Right lobe of liver (tissue), 6 donors: ENCODE measurements at regions of chr1 and their contacts with region 1.

Region 1: GRCh38 chr1:1441002-1441888 is 5.8 kb downstream of the VWA1 start:
- DNase-seq: peak in 1 of 3 donors; percentile 68
- ATAC-seq: peak; percentile 55 to 61 (median 58)
- H3K4me3 ChIP-seq: no peak overlapping the region
- H3K27ac ChIP-seq: no peak overlapping the region
- H3K4me1 ChIP-seq: peaks cover 0 to 34% (median 13%) of the 10 kb centered on the region in 4 donors
- H3K27me3 ChIP-seq: no peaks in the 10 kb centered on the region
- CTCF ChIP-seq: peak; percentile 80 to 89 (median 86)
- POLR2A ChIP-seq: no peak

Region 2: GRCh38 chr1:1387098-1388077 is 53.9 kb before region 1 on chr1:
- intact Hi-C with region 1: no loop called
- DNase-seq: no peak
- ATAC-seq: peak in 1 of 4 donors; percentile 36
- H3K4me3 ChIP-seq: no peak overlapping the region
- H3K27ac ChIP-seq: no peak overlapping the region
- H3K4me1 ChIP-seq: peaks cover 0 to 16% (median 0%) of the 10 kb centered on the region in 4 donors
- H3K27me3 ChIP-seq: no peaks in the 10 kb centered on the region
- CTCF ChIP-seq: no peak
- POLR2A ChIP-seq: no peak

Region 3: GRCh38 chr1:1406817-1407635 is 34.2 kb before region 1 on chr1 and contains the start of gene MRPL20:
- intact Hi-C with region 1: loop called in 1 of 2 experiments (anchors 5 kb)
- DNase-seq: peak; percentile 95 to 96 (median 96)
- ATAC-seq: peak; percentile 95 to 98 (median 98)
- H3K4me3 ChIP-seq: peak within 1 kb of the TSS; percentile 92 to 100 (median 100)
- H3K27ac ChIP-seq: peak within 1 kb of the TSS; percentile 65 to 82 (median 68)
- H3K4me1 ChIP-seq: peaks cover 0 to 43% (median 15%) of the 10 kb centered on the region in 4 donors
- H3K27me3 ChIP-seq: no peaks in the 10 kb centered on the region
- CTCF ChIP-seq: no peak
- POLR2A ChIP-seq: peak; percentile 82
- total RNA-seq, gene MRPL20: 44.1 to 91.2 (median 56.5) TPM